GM12878 (cell line): ENCODE measurements at regions of chr15 and their contacts with region 1.

Region 1: DNA sequence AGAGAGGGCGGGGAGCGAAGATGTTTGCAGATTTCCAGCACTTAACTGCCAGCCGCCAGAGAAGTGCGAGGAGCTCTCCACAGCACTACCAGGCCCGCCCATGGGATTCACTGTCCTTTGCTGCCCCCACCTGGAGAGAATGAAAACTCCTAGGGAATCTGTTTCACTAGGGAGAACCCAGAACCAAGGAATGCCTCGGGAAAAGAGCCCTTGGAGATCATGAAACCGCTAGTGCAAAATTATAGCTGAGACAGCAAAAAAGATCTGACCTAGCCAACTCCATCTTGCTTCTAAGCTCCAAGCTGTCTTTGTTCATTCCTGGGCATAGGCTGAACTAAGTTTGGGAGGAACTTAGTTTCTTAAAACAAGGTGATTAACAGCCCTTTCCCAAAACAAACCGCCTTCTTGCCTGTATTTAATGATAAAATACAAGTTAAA is 82.6 kb upstream of the GCNT3 start:
- DNase-seq: no peak
- ATAC-seq: peak; percentile 91
- H3K4me3 ChIP-seq: no peak overlapping the region
- H3K27ac ChIP-seq: no peak overlapping the region
- H3K4me1 ChIP-seq: no peaks in the 10 kb centered on the region; the same call in none of the 2 replicates
- H3K27me3 ChIP-seq: no peaks in the 10 kb centered on the region
- CTCF ChIP-seq: peak; percentile 73 to 89 (median 80)
- EP300 ChIP-seq: no peak
- POLR2A ChIP-seq: no peak
- RAD21 ChIP-seq: peak; percentile 96

Region 2: GRCh38 chr15:59104912-59105732 is 423.9 kb before region 1 on chr15 and contains the start of gene CCNB2:
- CTCF ChIA-PET with region 1: interaction called, 8 read pairs
- POLR2A ChIA-PET with region 1: no interaction called
- RAD21 ChIA-PET with region 1: interaction called, 7 read pairs
- SMC1A ChIA-PET with region 1: interaction called, 15 read pairs
- in situ Hi-C with region 1: no loop called
- intact Hi-C with region 1: no loop called
- DNase-seq: peak; percentile 85
- ATAC-seq: peak; percentile 100
- H3K4me3 ChIP-seq: peak within 1 kb of the TSS; percentile 95
- H3K27ac ChIP-seq: peak within 1 kb of the TSS; percentile 86
- H3K4me1 ChIP-seq: peaks cover 4% of the 10 kb centered on the region; the same call in 1 of the 2 replicates
- H3K27me3 ChIP-seq: no peaks in the 10 kb centered on the region
- CTCF ChIP-seq: no peak
- EP300 ChIP-seq: no peak
- POLR2A ChIP-seq: peak; percentile 98
- RAD21 ChIP-seq: no peak
- polyA plus RNA-seq, gene CCNB2: 205 to 211 TPM

Region 3: GRCh38 chr15:59339252-59339672 is 189.7 kb before region 1 on chr15:
- CTCF ChIA-PET with region 1: no interaction called
- POLR2A ChIA-PET with region 1: no interaction called
- RAD21 ChIA-PET with region 1: no interaction called
- SMC1A ChIA-PET with region 1: no interaction called
- in situ Hi-C with region 1: no loop called
- intact Hi-C with region 1: no loop called
- DNase-seq: no peak
- ATAC-seq: no peak
- H3K4me3 ChIP-seq: no peak overlapping the region
- H3K27ac ChIP-seq: no peak overlapping the region
- H3K4me1 ChIP-seq: peaks cover 23% of the 10 kb centered on the region
- H3K27me3 ChIP-seq: no peaks in the 10 kb centered on the region
- CTCF ChIP-seq: no peak
- EP300 ChIP-seq: no peak
- POLR2A ChIP-seq: no peak
- RAD21 ChIP-seq: no peak

Region 4: GRCh38 chr15:59516655-59517461 is 12.1 kb before region 1 on chr15:
- CTCF ChIA-PET with region 1: interaction called, 62 read pairs
- POLR2A ChIA-PET with region 1: interaction called, 9 read pairs
- RAD21 ChIA-PET with region 1: interaction called, 36 read pairs
- SMC1A ChIA-PET with region 1: interaction called, 45 read pairs
- in situ Hi-C with region 1: no loop called
- intact Hi-C with region 1: no loop called
- DNase-seq: no peak
- ATAC-seq: peak; percentile 83
- H3K4me3 ChIP-seq: peak overlapping the region; percentile 35
- H3K27ac ChIP-seq: peak overlapping the region; percentile 93
- H3K4me1 ChIP-seq: peaks cover 27% of the 10 kb centered on the region
- H3K27me3 ChIP-seq: no peaks in the 10 kb centered on the region
- CTCF ChIP-seq: no peak
- EP300 ChIP-seq: no peak
- POLR2A ChIP-seq: no peak
- RAD21 ChIP-seq: no peak

Region 5: DNA sequence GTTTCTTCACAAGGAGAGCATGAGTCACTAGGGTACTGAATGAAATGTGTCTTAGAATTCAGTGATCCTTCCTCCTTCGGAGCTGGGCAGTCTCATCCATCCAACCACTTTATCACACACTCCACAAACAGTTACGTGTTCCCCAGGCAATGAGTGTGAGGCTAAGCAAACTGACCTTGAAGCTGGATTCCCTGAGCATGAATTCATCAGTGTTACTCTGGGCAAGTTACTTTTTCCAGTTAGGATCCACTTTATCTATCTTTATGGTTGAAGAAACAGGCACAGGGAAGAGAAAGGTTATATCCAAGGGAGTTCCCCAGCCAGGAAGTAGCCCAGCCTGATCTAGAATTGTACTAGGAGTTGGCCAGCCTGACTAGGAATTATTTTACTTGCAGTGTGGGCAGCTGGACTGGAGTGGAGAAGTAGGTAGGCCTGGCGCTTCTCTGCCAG is 65.5 kb after region 1 on chr15:
- CTCF ChIA-PET with region 1: interaction called, 14 read pairs
- POLR2A ChIA-PET with region 1: no interaction called
- RAD21 ChIA-PET with region 1: interaction called, 7 read pairs
- SMC1A ChIA-PET with region 1: interaction called, 4 read pairs
- in situ Hi-C with region 1: no loop called
- intact Hi-C with region 1: no loop called
- DNase-seq: no peak
- ATAC-seq: no peak
- H3K4me3 ChIP-seq: no peak overlapping the region
- H3K27ac ChIP-seq: no peak overlapping the region
- H3K4me1 ChIP-seq: peaks cover 11% of the 10 kb centered on the region
- H3K27me3 ChIP-seq: no peaks in the 10 kb centered on the region
- CTCF ChIP-seq: no peak
- EP300 ChIP-seq: no peak
- POLR2A ChIP-seq: no peak
- RAD21 ChIP-seq: no peak

Region 6: DNA sequence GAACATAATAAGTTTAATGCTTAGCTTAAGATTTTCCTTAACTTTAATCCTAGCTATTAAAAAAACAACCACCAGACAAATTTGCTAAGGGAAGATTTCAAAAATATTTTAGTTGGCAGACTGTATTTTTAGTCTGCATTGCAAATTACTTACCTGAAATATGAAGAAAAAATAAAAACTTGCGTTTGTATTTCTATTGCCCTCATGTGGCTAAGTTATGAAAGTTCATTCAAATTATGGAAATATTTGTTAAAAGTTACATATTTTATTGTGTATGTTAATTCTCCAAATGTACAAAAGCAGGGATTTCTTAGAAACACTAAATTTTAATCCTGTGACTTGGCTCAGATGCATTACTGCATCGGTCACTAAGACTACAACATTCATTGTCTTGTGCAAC is 113.4 kb after region 1 on chr15:
- CTCF ChIA-PET with region 1: interaction called, 71 read pairs
- POLR2A ChIA-PET with region 1: no interaction called
- RAD21 ChIA-PET with region 1: interaction called, 4 read pairs
- SMC1A ChIA-PET with region 1: interaction called, 13 read pairs
- in situ Hi-C with region 1: no loop called
- intact Hi-C with region 1: no loop called
- DNase-seq: no peak
- ATAC-seq: no peak
- H3K4me3 ChIP-seq: no peak overlapping the region
- H3K27ac ChIP-seq: no peak overlapping the region
- H3K4me1 ChIP-seq: no peaks in the 10 kb centered on the region
- H3K27me3 ChIP-seq: no peaks in the 10 kb centered on the region
- CTCF ChIP-seq: no peak
- EP300 ChIP-seq: no peak
- POLR2A ChIP-seq: no peak
- RAD21 ChIP-seq: no peak